CD8-positive, alpha-beta T cell (primary cell): ENCODE measurements at regions of chrX and their contacts with region 1.

Region 1: DNA sequence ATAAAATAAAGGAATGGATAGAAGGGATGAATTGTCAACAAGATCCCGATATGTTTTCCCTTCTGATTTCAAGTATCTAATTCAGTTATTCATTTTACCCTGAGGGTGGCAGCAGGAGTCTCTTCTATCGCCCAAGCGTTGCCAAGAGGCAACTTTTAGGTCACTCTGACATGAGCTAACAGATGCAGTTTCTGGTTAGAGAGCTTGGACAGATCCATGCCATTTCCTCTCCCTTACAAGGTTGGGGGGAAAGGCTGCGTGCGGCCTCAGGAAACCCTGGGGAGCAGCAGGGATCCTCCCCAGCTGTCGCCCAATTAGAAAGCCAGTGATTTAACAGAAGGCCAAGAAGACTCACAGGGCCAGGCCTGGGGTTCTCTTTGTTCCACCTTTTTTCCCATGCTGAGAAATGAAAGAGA is 35.3 kb upstream of the WAS start:
- DNase-seq: peak in 7 of 9 experiments; percentile 8 to 72 (median 41)
- ATAC-seq: peak; percentile 71
- H3K4me3 ChIP-seq: no peak overlapping the region
- H3K4me3 Mint-ChIP-seq: no peak overlapping the region
- H3K27ac ChIP-seq: no peak overlapping the region
- H3K27ac Mint-ChIP-seq: no peak overlapping the region
- H3K4me1 ChIP-seq: no peaks in the 10 kb centered on the region
- H3K4me1 Mint-ChIP-seq: peaks cover 7% of the 10 kb centered on the region
- H3K27me3 ChIP-seq: no peaks in the 10 kb centered on the region
- H3K27me3 Mint-ChIP-seq: no peaks in the 10 kb centered on the region
- CTCF ChIP-seq: peak; percentile 58

Region 2: DNA sequence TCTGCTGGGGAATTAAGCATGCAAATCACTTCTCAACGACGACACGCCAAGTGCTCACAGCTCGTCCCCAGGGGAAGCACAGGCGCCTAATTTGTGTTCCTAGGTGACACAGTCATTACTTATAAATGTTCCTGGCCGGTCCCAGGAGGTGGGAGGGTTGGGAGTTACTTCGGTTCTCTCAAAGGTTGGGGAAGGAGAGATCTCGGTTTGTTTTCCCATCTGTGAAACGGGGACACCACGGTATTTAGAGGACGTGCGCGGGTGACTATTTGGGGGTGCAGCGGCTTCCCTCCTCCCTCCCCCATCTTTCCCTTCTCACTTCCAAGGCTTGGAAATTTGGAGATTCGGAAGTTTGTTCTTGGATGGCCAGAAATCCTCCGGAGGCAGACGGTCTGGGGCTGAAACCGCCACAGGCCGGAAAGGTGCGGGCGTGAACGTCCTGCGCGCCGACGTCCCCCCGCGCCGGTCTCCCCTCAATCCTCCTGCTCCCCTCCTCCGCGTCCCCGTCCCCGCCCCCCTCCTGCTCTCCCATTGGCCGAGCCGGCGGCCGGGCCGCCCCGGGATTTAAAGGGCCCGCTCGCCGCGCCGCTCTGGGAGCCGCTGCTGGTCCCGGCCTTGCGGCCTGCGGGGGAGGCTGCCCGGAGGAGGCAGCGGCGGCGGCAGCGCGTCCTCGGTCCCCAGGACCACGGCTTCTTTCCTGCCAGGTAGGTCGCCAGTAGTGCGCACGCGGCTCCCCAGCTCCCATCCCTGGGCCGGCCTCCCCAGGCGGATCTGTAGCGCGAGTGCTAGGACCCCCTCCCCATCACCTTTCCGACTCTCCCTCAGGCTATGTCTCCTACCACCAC is 139.7 kb before region 1 on chrX and contains the start of gene PORCN:
- CTCF ChIA-PET with region 1: no interaction called
- POLR2A ChIA-PET with region 1: no interaction called
- intact Hi-C with region 1: no loop called
- DNase-seq: peak; percentile 56 to 85 (median 81)
- ATAC-seq: peak; percentile 93
- H3K4me3 ChIP-seq: peak within 1 kb of the TSS; percentile 76 to 79
- H3K4me3 Mint-ChIP-seq: peak within 1 kb of the TSS; percentile 90
- H3K27ac ChIP-seq: peak within 1 kb of the TSS; percentile 76 to 78
- H3K27ac Mint-ChIP-seq: peak within 1 kb of the TSS; percentile 94
- H3K4me1 ChIP-seq: peaks cover 6% of the 10 kb centered on the region
- H3K4me1 Mint-ChIP-seq: peaks cover 25% of the 10 kb centered on the region
- H3K27me3 ChIP-seq: no peaks in the 10 kb centered on the region
- H3K27me3 Mint-ChIP-seq: no peaks in the 10 kb centered on the region
- CTCF ChIP-seq: no peak
- total RNA-seq, gene PORCN: 18.3 to 19.8 TPM

Region 3: DNA sequence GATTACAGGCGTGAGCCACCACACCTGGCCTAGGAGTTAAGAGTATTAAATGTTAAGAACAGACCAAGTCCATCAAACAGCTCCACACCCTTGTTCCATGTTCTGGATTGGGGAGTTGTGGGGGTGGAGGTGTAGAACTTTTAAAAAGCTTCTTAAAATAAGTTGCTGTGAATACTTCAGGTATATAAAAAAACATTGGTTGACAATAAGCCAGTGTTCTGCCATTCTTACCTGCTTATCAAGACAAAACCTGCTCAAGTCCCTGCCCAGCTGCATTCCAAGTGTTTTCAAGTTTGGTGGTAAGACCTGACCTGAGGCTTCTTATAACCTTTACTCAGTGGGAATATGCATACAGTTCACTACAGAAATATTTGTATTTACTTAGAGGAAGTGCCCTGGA is 67.7 kb before region 1 on chrX:
- CTCF ChIA-PET with region 1: no interaction called
- POLR2A ChIA-PET with region 1: no interaction called
- intact Hi-C with region 1: no loop called
- DNase-seq: no peak
- ATAC-seq: no peak
- H3K4me3 ChIP-seq: no peak overlapping the region
- H3K4me3 Mint-ChIP-seq: no peak overlapping the region
- H3K27ac ChIP-seq: no peak overlapping the region
- H3K27ac Mint-ChIP-seq: no peak overlapping the region
- H3K4me1 ChIP-seq: peaks cover 10% of the 10 kb centered on the region
- H3K4me1 Mint-ChIP-seq: peaks cover 20% of the 10 kb centered on the region
- H3K27me3 ChIP-seq: no peaks in the 10 kb centered on the region
- H3K27me3 Mint-ChIP-seq: no peaks in the 10 kb centered on the region
- CTCF ChIP-seq: no peak

Region 4: GRCh38 chrX:48937054-48937907 is 288.9 kb after region 1 on chrX:
- CTCF ChIA-PET with region 1: interaction called, 11 read pairs
- POLR2A ChIA-PET with region 1: no interaction called
- intact Hi-C with region 1: no loop called
- DNase-seq: peak; percentile 79 to 95 (median 89)
- ATAC-seq: peak; percentile 67
- H3K4me3 ChIP-seq: peak overlapping the region; percentile 33 to 45
- H3K4me3 Mint-ChIP-seq: peak overlapping the region; percentile 83
- H3K27ac ChIP-seq: peak overlapping the region; percentile 82 to 89
- H3K27ac Mint-ChIP-seq: peak overlapping the region; percentile 99
- H3K4me1 ChIP-seq: peaks cover 81% of the 10 kb centered on the region
- H3K4me1 Mint-ChIP-seq: peaks cover 76% of the 10 kb centered on the region
- H3K27me3 ChIP-seq: no peaks in the 10 kb centered on the region
- H3K27me3 Mint-ChIP-seq: no peaks in the 10 kb centered on the region
- CTCF ChIP-seq: no peak

Region 5: DNA sequence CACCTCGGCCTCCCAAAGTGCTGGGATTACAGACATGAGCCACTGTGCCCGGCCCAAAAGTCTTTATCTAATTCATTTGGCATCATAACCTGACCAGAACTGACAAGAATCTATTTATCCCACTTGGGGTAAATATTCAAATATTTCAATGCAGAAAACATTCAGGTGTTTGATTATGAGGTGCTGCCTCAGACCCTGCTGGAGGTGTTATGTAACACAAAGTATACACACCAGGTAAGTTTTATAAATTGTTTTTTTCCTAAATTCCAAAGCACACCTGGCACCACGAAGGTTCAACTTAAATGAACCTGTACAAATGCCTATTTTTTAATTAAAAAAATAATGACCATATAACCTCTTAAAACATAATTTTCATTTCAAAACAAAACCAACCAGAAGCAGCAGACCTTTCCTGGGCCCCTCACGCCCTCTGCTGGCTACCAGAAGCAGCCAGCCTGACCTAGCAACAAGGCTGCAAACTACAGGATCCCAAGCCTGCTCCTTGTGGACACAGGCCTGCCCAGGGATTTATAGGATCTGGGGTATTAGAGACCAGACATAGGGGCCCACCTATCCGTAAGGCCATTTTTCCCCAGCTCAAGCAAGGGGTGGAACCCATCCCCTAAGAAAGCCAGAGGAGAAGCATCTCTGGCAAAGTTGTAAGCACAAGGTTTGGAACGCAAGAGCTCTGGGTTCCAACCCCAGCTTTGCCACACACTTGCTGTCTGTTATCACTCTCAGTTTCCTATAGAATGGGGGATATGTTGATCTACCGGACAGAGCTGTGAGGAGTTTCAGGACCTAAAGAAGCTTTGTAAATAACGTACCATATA is 297.4 kb after region 1 on chrX:
- CTCF ChIA-PET with region 1: interaction called, 6 read pairs
- POLR2A ChIA-PET with region 1: no interaction called
- intact Hi-C with region 1: loop called (anchors 1 to 2 kb)
- DNase-seq: peak in 8 of 9 experiments; percentile 10 to 78 (median 62)
- ATAC-seq: peak; percentile 70
- H3K4me3 ChIP-seq: no peak overlapping the region
- H3K4me3 Mint-ChIP-seq: peak overlapping the region; percentile 11
- H3K27ac ChIP-seq: no peak overlapping the region
- H3K27ac Mint-ChIP-seq: peak overlapping the region; percentile 67
- H3K4me1 ChIP-seq: peaks cover 52% of the 10 kb centered on the region
- H3K4me1 Mint-ChIP-seq: peaks cover 45% of the 10 kb centered on the region
- H3K27me3 ChIP-seq: no peaks in the 10 kb centered on the region
- H3K27me3 Mint-ChIP-seq: no peaks in the 10 kb centered on the region
- CTCF ChIP-seq: peak; percentile 68